K562 (cell line): ENCODE measurements at regions of chr7 and their contacts with region 1.

Region 1: GRCh38 chr7:106644999-106645398 is 16.0 kb downstream of the CCDC71L start:
- DNase-seq: no peak
- ATAC-seq: peak; percentile 55; the same call in 1 of the 3 replicates
- H3K4me3 ChIP-seq: no peak overlapping the region
- H3K27ac ChIP-seq: no peak overlapping the region
- H3K4me1 ChIP-seq: no peaks in the 10 kb centered on the region; a peak in 1 of 5 replicates
- H3K27me3 ChIP-seq: no peaks in the 10 kb centered on the region
- CTCF ChIP-seq: no peak
- EP300 ChIP-seq: no peak
- POLR2A ChIP-seq: no peak
- RAD21 ChIP-seq: no peak

Region 2: DNA sequence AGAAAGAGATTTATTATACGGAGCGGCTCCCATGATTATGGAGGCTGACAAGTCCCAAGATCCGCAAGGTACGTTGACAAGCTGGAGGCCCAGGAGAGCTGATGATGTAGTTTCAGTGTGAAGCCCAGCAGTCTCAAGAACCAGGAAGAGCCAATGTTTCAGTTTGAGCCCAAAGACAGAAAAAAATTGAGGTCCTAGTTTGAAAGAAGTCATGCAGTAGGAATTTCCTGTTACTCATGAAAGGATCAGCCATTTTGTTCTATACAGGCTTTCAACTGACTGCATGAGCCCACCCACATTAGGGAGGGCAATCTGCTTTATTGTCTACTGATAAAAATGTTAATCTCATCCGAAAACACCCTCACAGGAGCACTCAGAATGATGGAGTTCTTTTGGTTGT is 35.6 kb before region 1 on chr7:
- CTCF ChIA-PET with region 1: no interaction called
- POLR2A ChIA-PET with region 1: no interaction called
- in situ Hi-C with region 1: no loop called
- intact Hi-C with region 1: no loop called
- DNase-seq: no peak
- ATAC-seq: no peak
- H3K4me3 ChIP-seq: no peak overlapping the region
- H3K27ac ChIP-seq: no peak overlapping the region
- H3K4me1 ChIP-seq: peaks cover 0 to 19% of the 10 kb centered on the region in 2 experiments; a peak in 4 of 5 replicates
- H3K27me3 ChIP-seq: no peaks in the 10 kb centered on the region
- CTCF ChIP-seq: no peak
- EP300 ChIP-seq: no peak
- POLR2A ChIP-seq: no peak
- RAD21 ChIP-seq: no peak

Region 3: GRCh38 chr7:106629516-106629915 is 15.5 kb before region 1 on chr7:
- CTCF ChIA-PET with region 1: no interaction called
- POLR2A ChIA-PET with region 1: interaction called, 10 read pairs
- in situ Hi-C with region 1: no loop called
- intact Hi-C with region 1: no loop called
- DNase-seq: no peak
- ATAC-seq: no peak
- H3K4me3 ChIP-seq: no peak overlapping the region
- H3K27ac ChIP-seq: no peak overlapping the region
- H3K4me1 ChIP-seq: peaks cover 0 to 16% of the 10 kb centered on the region in 2 experiments; a peak in 4 of 5 replicates
- H3K27me3 ChIP-seq: peaks cover 2 to 21% of the 10 kb centered on the region in 2 experiments; a peak in 2 of 5 replicates
- CTCF ChIP-seq: no peak
- EP300 ChIP-seq: no peak
- POLR2A ChIP-seq: no peak
- RAD21 ChIP-seq: no peak

Region 4: GRCh38 chr7:106848851-106849442 is 203.9 kb after region 1 on chr7:
- CTCF ChIA-PET with region 1: no interaction called
- POLR2A ChIA-PET with region 1: no interaction called
- in situ Hi-C with region 1: no loop called
- intact Hi-C with region 1: no loop called
- DNase-seq: peak; percentile 49 to 76 (median 59)
- ATAC-seq: peak; percentile 70
- H3K4me3 ChIP-seq: no peak overlapping the region
- H3K27ac ChIP-seq: peak overlapping the region; percentile 4; the same call in 1 of the 3 replicates
- H3K4me1 ChIP-seq: peaks cover 0 to 14% of the 10 kb centered on the region in 2 experiments; a peak in 3 of 5 replicates
- H3K27me3 ChIP-seq: no peaks in the 10 kb centered on the region; a peak in 1 of 5 replicates
- CTCF ChIP-seq: no peak
- EP300 ChIP-seq: peak; percentile 74
- POLR2A ChIP-seq: no peak
- RAD21 ChIP-seq: peak in 1 of 2 experiments; percentile 36; a peak in 2 of 4 replicates